Activated T-helper 2 cell treated with anti-CD3 and anti-CD28 coated beads, Interferon-gamma antibody, Interleukin-2, Interleukin-4, amounts not matched to agents 10 μg/mL and 5 μg/mL and 100 μg/mL, durations not matched to agents 14 hours and 24 hours and 36 hours (primary cell): ENCODE measurements at regions of chr20 and their contacts with region 1.

Region 1: DNA sequence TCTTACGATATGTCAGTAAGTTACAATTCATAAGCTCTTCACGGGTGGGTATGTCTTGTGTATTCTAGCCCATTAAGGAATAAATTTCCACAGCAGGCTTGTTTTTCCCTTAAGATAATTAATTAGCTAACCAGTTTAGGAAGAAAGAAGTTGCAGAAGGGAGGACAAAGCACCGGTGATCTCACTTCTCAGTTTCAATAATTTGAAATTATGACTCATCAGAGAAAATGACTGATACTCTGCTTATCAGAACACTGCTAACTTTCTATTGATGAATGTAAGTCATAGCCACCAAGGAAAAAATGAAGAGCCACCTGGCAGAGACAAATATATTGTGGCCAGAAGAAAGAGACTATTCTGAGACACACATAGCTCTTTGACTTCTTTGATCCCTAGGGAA is 35.0 kb upstream of the ENTPD6 start:
- DNase-seq: no peak
- H3K4me3 Mint-ChIP-seq: peak overlapping the region; percentile 11
- H3K27ac Mint-ChIP-seq: peak overlapping the region; percentile 58
- H3K4me1 Mint-ChIP-seq: peaks cover 33% of the 10 kb centered on the region
- H3K27me3 Mint-ChIP-seq: peaks cover 2% of the 10 kb centered on the region

Region 2: DNA sequence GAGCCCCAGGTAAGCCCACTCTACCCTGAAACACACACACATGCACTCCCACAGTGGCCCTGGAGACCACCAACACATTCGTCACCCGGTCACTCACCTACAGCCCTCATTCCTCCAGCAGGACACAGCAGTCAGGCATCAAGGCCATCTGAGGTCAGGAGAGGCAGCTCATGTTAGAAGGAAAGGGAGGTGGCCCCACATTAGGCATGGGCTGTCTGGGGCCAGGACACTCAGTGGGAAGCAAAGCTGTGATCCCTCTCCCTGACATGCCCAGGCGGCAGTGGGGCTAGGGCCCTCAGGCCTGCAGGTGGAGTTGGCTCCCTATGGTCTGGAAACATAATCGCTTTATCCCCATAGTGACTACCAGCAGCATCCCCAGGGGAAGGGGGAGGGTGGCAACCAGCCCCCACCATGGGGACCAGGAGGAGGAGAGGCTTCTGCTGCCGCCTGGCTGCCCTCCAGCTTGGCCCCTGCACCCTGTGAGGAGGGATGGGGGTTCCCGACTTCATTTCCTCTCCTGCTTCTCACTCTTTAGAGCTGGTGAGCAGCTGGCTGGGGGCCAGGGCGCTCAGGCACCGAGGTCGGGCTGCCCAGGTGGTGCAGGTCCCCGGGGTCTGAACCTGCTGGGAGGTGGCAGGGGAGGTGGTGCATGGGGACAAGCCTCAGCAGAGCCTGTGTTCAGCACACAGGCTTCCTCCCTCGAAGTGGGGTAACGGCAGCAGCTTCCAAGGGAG is 288.0 kb before region 1 on chr20:
- intact Hi-C with region 1: no loop called
- DNase-seq: no peak
- H3K4me3 Mint-ChIP-seq: no peak overlapping the region
- H3K27ac Mint-ChIP-seq: no peak overlapping the region
- H3K4me1 Mint-ChIP-seq: no peaks in the 10 kb centered on the region
- H3K27me3 Mint-ChIP-seq: no peaks in the 10 kb centered on the region

Region 3: DNA sequence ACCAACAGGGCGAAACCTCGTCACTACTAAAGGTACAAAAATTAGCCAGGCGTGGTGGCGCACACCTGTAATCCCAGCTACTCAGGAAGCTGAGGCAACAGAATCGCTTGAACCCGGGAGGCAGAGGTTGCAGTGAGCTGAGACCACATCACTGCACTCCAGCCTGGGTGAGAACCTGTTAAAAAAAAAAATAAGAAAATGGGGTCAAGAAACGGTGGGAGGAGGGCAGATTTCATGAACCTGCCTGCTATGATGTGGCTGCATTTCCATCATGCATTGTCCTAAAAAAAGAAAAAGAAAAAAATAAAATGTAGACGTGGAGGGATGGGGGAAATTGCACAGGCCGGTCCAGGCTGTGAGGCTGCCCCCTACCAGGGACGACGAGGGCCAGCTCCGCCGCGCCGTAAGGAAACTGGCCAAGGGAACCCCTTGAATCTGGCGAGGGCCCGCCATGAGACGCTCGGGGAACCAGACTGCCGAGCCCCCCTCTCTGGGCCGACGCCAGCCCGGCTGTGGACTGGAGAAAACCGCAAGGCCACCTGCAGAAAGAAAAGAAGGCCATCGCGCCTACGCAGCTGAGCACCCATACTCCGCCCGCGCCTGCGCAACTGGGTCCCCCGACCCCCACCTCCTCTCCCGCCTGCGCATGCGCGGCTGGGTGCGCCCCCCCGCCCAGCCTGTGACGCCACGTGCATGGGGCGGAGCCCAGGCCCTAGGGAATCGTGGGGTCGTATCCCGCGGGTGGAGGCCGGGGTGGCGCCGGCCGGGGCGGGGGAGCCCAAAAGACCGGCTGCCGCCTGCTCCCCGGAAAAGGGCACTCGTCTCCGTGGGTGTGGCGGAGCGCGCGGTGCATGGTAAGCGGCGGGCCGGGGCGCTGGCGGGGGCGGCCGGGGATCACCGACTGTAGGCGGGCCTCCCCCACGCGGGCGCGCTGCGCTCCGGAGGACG is 34.8 kb after region 1 on chr20 and contains the start of gene ENTPD6:
- intact Hi-C with region 1: loop called (anchors 2 kb)
- DNase-seq: peak; percentile 88
- H3K4me3 Mint-ChIP-seq: peak within 1 kb of the TSS; percentile 94
- H3K27ac Mint-ChIP-seq: peak within 1 kb of the TSS; percentile 75
- H3K4me1 Mint-ChIP-seq: peaks cover 22% of the 10 kb centered on the region
- H3K27me3 Mint-ChIP-seq: peaks cover 6% of the 10 kb centered on the region
- total RNA-seq, gene ENTPD6: 48.8 and 49.1 TPM in 2 replicates

Region 4: GRCh38 chr20:25207146-25207959 is 46.9 kb after region 1 on chr20:
- intact Hi-C with region 1: no loop called
- DNase-seq: no peak
- H3K4me3 Mint-ChIP-seq: no peak overlapping the region
- H3K27ac Mint-ChIP-seq: no peak overlapping the region
- H3K4me1 Mint-ChIP-seq: peaks cover 3% of the 10 kb centered on the region
- H3K27me3 Mint-ChIP-seq: no peaks in the 10 kb centered on the region